B cell (primary cell): ENCODE measurements at regions of chr4 and their contacts with region 1.

Region 1: GRCh38 chr4:173420324-173420752 is 21.4 kb upstream of the SCRG1 start:
- DNase-seq: peak; percentile 19
- ATAC-seq: no peak
- H3K4me3 ChIP-seq: no peak overlapping the region
- H3K4me3 Mint-ChIP-seq: no peak overlapping the region
- H3K27ac ChIP-seq: no peak overlapping the region
- H3K27ac Mint-ChIP-seq: no peak overlapping the region
- H3K4me1 ChIP-seq: peaks cover 0 to 6% of the 10 kb centered on the region in 2 donors
- H3K4me1 Mint-ChIP-seq: peaks cover 7% of the 10 kb centered on the region
- H3K27me3 ChIP-seq: no peaks in the 10 kb centered on the region
- H3K27me3 Mint-ChIP-seq: peaks cover 2% of the 10 kb centered on the region
- CTCF ChIP-seq: peak; percentile 55

Region 2: DNA sequence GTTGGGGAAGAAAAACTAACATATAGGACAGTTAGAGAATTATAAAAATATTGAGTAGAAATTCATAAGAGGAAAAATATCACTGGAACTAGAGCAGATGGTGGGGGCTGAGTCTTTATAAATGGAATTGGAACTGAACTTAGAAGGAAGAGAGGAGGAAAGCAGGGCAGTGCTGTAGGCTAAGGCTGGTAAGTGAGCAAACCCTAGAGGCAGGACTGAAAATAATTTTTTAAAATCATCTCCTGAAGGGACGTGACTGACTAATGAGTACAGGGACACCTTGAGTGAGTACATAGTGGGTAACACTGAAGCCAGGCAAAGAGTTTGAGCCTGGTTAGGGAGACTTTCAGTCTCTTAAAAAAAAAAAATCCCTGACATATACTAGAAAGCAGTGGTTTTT is 188.4 kb before region 1 on chr4:
- CTCF ChIA-PET with region 1: no interaction called
- POLR2A ChIA-PET with region 1: no interaction called
- intact Hi-C with region 1: no loop called
- DNase-seq: no peak
- ATAC-seq: no peak
- H3K4me3 ChIP-seq: no peak overlapping the region
- H3K4me3 Mint-ChIP-seq: no peak overlapping the region
- H3K27ac ChIP-seq: no peak overlapping the region
- H3K27ac Mint-ChIP-seq: no peak overlapping the region
- H3K4me1 ChIP-seq: no peaks in the 10 kb centered on the region
- H3K4me1 Mint-ChIP-seq: peaks cover 6% of the 10 kb centered on the region
- H3K27me3 ChIP-seq: no peaks in the 10 kb centered on the region
- H3K27me3 Mint-ChIP-seq: no peaks in the 10 kb centered on the region
- CTCF ChIP-seq: no peak

Region 3: DNA sequence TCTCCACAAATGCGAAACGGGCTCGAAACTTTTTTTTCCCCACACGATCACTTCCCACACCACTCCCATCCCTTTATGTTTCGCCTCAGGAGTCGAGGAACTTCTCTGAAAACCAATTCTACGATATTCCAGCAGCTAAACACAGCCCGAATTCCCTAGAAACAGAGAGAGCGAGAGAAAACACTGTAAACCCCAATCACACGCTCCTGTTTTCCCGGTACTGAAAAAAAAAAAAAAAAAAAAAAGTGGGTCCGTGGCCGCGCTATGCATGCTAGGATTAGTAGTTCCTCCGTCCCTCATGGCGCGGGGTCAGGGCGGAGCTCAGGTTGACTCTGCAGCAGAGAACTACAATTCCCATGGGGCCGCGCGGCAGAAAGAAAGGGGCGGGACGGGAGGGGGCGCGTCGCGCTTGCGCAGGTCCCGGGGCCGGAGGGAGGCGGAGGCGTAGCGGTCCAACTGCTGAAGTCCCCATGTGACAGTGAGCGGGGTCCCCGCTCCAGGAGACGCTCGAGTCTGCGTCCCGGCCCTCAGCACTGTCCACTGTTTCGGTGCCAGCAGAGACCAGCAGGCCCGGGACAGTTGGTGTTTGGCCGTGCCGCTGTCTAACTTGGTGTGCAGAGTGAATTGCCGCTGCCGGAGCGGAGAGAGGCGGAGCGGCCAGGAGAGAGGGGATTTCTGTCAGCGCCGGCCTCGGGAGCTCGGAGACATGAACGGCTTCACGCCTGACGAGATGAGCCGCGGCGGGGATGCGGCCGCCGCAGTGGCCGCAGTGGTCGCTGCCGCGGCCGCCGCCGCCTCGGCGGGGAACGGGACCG is 49.7 kb before region 1 on chr4 and contains the start of gene SAP30:
- CTCF ChIA-PET with region 1: interaction called, 4 read pairs
- POLR2A ChIA-PET with region 1: no interaction called
- intact Hi-C with region 1: loop called (anchors 5 kb)
- DNase-seq: peak; percentile 99
- ATAC-seq: peak; percentile 83
- H3K4me3 ChIP-seq: peak within 1 kb of the TSS; percentile 81 to 100 (median 99)
- H3K4me3 Mint-ChIP-seq: peak within 1 kb of the TSS; percentile 100
- H3K27ac ChIP-seq: peak within 1 kb of the TSS; percentile 84 to 88
- H3K27ac Mint-ChIP-seq: peak within 1 kb of the TSS; percentile 88
- H3K4me1 ChIP-seq: peaks cover 9 to 12% of the 10 kb centered on the region in 2 donors
- H3K4me1 Mint-ChIP-seq: peaks cover 21% of the 10 kb centered on the region
- H3K27me3 ChIP-seq: peaks cover 0 to 2% (median 0%) of the 10 kb centered on the region in 4 experiments
- H3K27me3 Mint-ChIP-seq: peaks cover 3% of the 10 kb centered on the region
- CTCF ChIP-seq: no peak
- total RNA-seq, gene SAP30: 2.5 and 2.7 TPM in 2 replicates

Region 4: DNA sequence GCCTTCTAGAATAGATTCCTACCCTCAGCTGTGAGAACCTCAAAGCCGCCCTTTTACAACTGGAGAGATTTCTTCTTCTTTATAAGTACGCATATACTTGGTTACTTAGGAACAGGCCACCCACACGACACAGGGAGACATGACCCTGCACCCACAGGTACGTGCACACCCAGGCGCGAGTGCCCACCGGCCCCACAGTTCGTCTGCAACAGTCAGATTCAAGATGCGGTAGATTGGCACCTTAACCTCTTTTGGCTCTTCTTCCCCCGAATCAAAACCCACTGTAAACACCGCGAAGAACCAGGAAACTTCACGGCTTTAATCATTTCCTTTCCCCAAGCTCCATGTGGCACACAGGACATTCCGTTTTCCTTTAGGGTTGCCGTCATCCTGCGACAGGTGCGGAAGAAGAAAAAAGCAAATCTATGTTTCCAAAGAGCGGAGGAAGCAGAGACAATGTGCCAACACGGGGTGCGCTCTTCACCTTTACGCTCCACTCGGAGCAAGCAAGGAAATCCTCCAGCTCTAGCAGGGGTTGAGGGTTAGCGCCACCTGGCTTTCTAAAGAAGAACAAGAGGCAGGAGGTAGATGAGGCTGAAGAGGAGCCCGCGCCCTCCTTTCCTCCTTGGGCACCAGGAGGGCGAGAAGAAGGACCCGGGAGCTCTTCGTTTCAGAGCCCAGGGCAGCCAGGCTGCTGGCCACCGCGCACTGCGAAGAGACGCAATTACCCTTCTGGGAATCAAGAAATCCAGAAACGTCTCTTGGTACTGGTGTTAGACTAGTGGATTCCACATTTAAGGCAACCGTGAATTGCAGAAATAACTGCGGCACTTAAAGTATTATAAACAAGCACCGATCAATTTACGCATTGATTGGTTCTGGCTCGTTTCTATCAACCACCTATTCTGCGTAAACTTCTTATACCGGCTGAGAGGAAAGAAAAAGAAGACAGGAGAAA is 74.0 kb after region 1 on chr4:
- CTCF ChIA-PET with region 1: interaction called, 13 read pairs
- POLR2A ChIA-PET with region 1: no interaction called
- intact Hi-C with region 1: loop called (anchors 1 kb)
- DNase-seq: peak; percentile 67
- ATAC-seq: peak; percentile 85
- H3K4me3 ChIP-seq: peak overlapping the region; percentile 5 to 61 (median 32)
- H3K4me3 Mint-ChIP-seq: peak overlapping the region; percentile 92
- H3K27ac ChIP-seq: no peak overlapping the region
- H3K27ac Mint-ChIP-seq: peak overlapping the region; percentile 37
- H3K4me1 ChIP-seq: peaks cover 11 to 29% of the 10 kb centered on the region in 2 donors
- H3K4me1 Mint-ChIP-seq: peaks cover 29% of the 10 kb centered on the region
- H3K27me3 ChIP-seq: peaks cover 0 to 22% (median 6%) of the 10 kb centered on the region in 4 experiments
- H3K27me3 Mint-ChIP-seq: peaks cover 23% of the 10 kb centered on the region
- CTCF ChIP-seq: peak; percentile 66

Region 5: GRCh38 chr4:173859091-173859713 is 438.9 kb after region 1 on chr4:
- CTCF ChIA-PET with region 1: no interaction called
- POLR2A ChIA-PET with region 1: no interaction called
- intact Hi-C with region 1: no loop called
- DNase-seq: no peak
- ATAC-seq: no peak
- H3K4me3 ChIP-seq: no peak overlapping the region
- H3K4me3 Mint-ChIP-seq: no peak overlapping the region
- H3K27ac ChIP-seq: no peak overlapping the region
- H3K27ac Mint-ChIP-seq: no peak overlapping the region
- H3K4me1 ChIP-seq: no peaks in the 10 kb centered on the region
- H3K4me1 Mint-ChIP-seq: no peaks in the 10 kb centered on the region
- H3K27me3 ChIP-seq: no peaks in the 10 kb centered on the region
- H3K27me3 Mint-ChIP-seq: no peaks in the 10 kb centered on the region
- CTCF ChIP-seq: no peak

Region 6: DNA sequence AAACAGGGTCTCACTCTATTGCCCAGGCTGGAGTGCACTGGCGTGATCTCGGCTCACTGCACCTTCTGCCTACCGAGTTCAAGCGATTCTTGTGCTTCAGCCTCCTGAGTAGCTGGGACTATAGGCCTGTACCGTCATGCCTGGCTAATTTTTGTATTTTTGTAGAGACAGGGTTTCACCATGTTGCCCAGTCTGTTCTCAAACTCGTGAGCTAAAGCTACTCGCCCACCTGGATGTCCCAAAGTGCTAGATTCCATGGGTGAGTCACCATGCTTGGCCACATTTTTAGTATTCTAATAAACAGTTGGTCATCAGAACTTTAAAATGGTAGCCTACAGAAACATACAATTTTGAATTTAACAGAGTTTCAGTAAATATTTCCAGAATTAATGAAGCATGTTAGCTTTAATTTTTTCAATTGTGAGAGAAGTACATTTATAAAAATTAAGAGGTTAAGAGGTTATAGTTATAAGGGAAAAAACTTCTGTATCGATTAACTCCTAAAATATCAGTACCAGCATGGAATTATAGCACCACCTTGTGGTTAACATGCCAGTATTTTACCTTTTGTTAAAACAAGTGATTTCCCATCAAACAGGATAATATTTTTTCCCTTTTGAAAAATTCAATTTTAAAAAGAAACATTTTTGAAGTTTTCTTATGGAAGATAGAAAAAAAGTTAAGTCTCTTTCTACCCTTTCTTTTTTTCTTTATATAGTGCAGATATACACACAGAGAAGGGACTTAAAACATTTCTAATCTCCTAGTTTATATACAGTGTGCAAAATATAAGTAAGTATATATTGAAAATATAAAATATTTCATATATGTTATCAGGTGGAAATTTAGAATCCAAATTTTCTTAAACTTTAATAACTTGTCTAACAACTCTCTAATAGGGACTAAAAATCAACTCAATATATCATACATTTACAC is 898.8 kb after region 1 on chr4:
- CTCF ChIA-PET with region 1: interaction called, 6 read pairs
- POLR2A ChIA-PET with region 1: no interaction called
- intact Hi-C with region 1: loop called (anchors 2 kb)
- DNase-seq: peak; percentile 38
- ATAC-seq: no peak
- H3K4me3 ChIP-seq: no peak overlapping the region
- H3K4me3 Mint-ChIP-seq: no peak overlapping the region
- H3K27ac ChIP-seq: no peak overlapping the region
- H3K27ac Mint-ChIP-seq: no peak overlapping the region
- H3K4me1 ChIP-seq: no peaks in the 10 kb centered on the region
- H3K4me1 Mint-ChIP-seq: no peaks in the 10 kb centered on the region
- H3K27me3 ChIP-seq: no peaks in the 10 kb centered on the region
- H3K27me3 Mint-ChIP-seq: no peaks in the 10 kb centered on the region
- CTCF ChIP-seq: peak; percentile 83